ENCODE measurements at regions of chr19 and their contacts with region 1.

Region 1: DNA sequence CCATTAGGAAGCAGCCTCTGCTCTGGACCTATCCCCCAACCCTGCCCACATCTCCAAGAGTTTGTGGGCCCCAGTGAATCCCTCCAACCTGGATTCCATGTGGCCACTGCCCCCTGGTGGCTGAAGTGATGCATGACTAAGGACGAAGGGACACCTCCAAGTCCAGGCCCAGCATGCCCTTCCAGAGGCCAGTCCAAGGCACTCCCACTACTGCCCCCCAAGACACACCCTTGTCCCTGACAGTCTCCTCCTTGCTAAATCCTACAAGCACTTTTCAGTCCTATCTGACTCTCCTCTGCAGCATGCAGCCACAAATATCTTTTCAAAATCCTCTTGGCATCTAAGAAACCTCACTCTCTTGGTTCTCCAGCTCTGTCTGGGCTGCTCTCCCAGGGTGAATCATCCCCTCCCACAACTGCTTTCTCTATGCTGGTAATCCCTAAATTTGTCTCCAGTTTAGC is 33.0 kb downstream of the DEDD2 start:
- DNase-seq: peak; percentile 63 to 90 (median 82)
- ATAC-seq: peak; percentile 81 to 98 (median 94)
- H3K4me3 ChIP-seq: no peak overlapping the region
- H3K27ac ChIP-seq: no peak overlapping the region
- H3K4me1 ChIP-seq: no peaks in the 10 kb centered on the region
- H3K27me3 ChIP-seq: peaks cover 0 to 10% (median 3%) of the 10 kb centered on the region in 4 donors
- CTCF ChIP-seq: peak; percentile 85 to 89 (median 88)

Region 2: DNA sequence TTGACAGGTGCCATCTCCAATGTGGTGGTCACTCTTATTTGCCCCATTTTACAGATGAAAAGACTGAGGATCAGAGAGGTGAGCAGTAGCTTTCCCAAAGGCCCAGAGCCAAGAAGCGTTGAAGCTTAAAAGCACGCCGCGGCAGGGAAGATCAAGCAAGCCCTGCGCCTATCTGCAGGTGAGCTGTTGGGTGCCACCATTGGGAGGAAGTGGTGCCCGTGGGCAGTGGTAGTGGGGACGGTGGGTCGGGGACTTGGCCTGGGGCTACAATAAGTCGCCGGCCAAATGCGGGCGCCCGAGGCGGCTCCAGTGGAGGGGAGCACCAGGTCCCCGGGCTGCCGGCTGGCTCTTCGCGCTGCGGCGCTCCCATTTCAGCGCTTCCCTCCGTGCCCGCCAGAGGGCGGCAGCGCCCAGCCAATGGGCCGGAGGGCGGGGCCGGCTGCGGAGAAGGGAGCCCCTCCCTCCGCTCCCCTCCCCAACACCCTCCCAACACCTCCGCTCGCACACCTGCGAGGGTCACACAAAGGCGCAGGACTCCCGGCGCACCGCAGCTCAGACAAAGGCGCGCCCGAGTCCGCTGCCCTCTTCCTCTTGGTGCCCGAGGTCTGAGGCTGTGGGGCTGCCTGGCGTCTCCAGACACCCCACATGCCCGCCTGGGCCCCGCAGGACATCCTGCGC is 51.4 kb before region 1 on chr19:
- intact Hi-C with region 1: loop called (anchors 5 to 10 kb)
- DNase-seq: peak; percentile 62 to 96 (median 85)
- ATAC-seq: peak; percentile 92 to 97 (median 96)
- H3K4me3 ChIP-seq: peak overlapping the region in 2 of 4 donors; percentile 21 to 29
- H3K27ac ChIP-seq: no peak overlapping the region
- H3K4me1 ChIP-seq: no peaks in the 10 kb centered on the region
- H3K27me3 ChIP-seq: peaks cover 0 to 6% (median 0%) of the 10 kb centered on the region in 4 donors
- CTCF ChIP-seq: peak; percentile 95 to 99 (median 96)

Region 3: GRCh38 chr19:42450314-42450934 is 266.0 kb after region 1 on chr19:
- intact Hi-C with region 1: no loop called
- DNase-seq: peak; percentile 76 to 91 (median 86)
- ATAC-seq: peak; percentile 86 to 99 (median 97)
- H3K4me3 ChIP-seq: no peak overlapping the region
- H3K27ac ChIP-seq: peak overlapping the region in 2 of 4 donors; percentile 38 to 55
- H3K4me1 ChIP-seq: peaks cover 0 to 11% (median 4%) of the 10 kb centered on the region in 3 donors
- H3K27me3 ChIP-seq: no peaks in the 10 kb centered on the region
- CTCF ChIP-seq: peak; percentile 69 to 79 (median 72)

Region 4: GRCh38 chr19:42553292-42554045 is 369.0 kb after region 1 on chr19:
- intact Hi-C with region 1: no loop called
- DNase-seq: no peak
- ATAC-seq: peak in 2 of 4 donors; percentile 69 to 72
- H3K4me3 ChIP-seq: no peak overlapping the region
- H3K27ac ChIP-seq: no peak overlapping the region
- H3K4me1 ChIP-seq: no peaks in the 10 kb centered on the region
- H3K27me3 ChIP-seq: no peaks in the 10 kb centered on the region
- CTCF ChIP-seq: no peak

Measured in pancreas (tissue), 10 donors.